ENCODE measurements at regions of chr1 and their contacts with region 1.

Region 1: DNA sequence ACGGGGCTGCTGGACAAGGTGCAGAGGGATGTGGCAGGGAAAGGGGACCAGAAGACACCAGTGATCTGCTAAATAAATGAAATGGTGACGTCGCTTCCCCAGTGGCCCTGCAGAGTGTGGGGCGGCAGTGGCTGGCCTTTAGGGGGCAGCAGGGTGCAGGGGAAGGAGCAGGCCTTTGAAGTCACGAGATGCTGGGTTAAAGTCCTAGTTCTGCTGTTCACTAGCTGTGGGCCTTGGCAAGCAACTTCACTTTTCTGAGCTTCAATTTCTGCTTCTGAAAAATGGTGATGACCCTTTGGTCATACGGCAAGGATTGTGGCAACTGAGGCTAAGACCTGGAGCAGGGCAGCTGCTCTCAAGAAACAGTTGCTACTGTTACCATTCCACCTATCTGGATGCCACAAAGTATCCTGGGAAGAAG is 9.2 kb upstream of the GALE start:
- DNase-seq: peak; percentile 90
- ATAC-seq: peak; percentile 89
- H3K4me3 ChIP-seq: peak overlapping the region in 1 of 5 experiments; percentile 29
- H3K4me3 Mint-ChIP-seq: no peak overlapping the region
- H3K27ac ChIP-seq: peak overlapping the region; percentile 53 to 73
- H3K27ac Mint-ChIP-seq: peak overlapping the region; percentile 84
- H3K4me1 ChIP-seq: peaks cover 18 to 21% of the 10 kb centered on the region in 2 donors
- H3K4me1 Mint-ChIP-seq: peaks cover 26% of the 10 kb centered on the region
- H3K27me3 ChIP-seq: no peaks in the 10 kb centered on the region
- H3K27me3 Mint-ChIP-seq: no peaks in the 10 kb centered on the region
- CTCF ChIP-seq: peak; percentile 78

Region 2: DNA sequence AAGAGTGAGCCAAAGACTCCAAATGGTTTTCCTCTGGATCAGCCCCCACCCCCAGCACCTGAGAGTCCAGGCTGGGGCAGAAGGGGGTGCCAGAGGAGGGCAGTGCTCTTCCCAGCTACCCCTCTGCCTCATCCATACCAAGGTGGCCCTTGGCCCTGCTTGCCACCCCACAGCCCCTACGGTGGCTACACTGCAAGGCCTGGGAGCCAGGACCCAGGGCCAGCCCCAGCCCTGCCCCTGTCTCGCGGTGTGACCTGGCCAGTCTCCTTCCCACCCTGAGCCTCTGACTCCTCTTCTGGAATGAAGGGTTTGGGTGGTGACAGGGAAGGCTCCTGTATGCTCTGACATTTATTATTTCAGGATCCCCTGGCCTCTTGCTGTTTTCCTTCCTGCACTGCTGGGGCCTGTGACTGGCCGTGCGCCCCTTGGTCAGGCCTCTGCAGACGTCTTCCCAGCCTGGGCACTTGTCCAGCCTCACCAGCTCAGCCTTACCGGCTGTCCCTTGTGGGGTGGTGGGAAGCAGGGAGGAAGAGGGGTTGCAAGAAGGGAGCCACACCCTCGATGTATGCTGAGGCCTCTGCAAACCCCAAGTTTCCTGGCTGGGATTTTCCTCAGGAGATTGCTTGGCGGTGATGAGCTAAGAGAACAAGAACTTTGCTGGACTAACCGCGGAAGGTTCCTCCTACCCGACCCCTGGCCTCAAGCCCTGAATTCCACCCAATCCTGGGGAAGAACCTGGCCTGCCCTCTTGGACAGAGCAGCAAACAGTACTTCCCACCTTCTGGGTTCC is 339.3 kb before region 1 on chr1:
- CTCF ChIA-PET with region 1: no interaction called
- POLR2A ChIA-PET with region 1: no interaction called
- intact Hi-C with region 1: no loop called
- DNase-seq: no peak
- ATAC-seq: no peak
- H3K4me3 ChIP-seq: no peak overlapping the region
- H3K4me3 Mint-ChIP-seq: no peak overlapping the region
- H3K27ac ChIP-seq: no peak overlapping the region
- H3K27ac Mint-ChIP-seq: no peak overlapping the region
- H3K4me1 ChIP-seq: no peaks in the 10 kb centered on the region
- H3K4me1 Mint-ChIP-seq: no peaks in the 10 kb centered on the region
- H3K27me3 ChIP-seq: peaks cover 0 to 5% (median 2%) of the 10 kb centered on the region in 4 experiments
- H3K27me3 Mint-ChIP-seq: peaks cover 4% of the 10 kb centered on the region
- CTCF ChIP-seq: no peak

Region 3: GRCh38 chr1:23777979-23778814 is 31.6 kb before region 1 on chr1 and contains the start of gene PITHD1:
- CTCF ChIA-PET with region 1: interaction called, 23 read pairs
- POLR2A ChIA-PET with region 1: interaction called, 6 read pairs
- intact Hi-C with region 1: loop called (anchors 5 kb)
- DNase-seq: peak; percentile 92
- ATAC-seq: peak; percentile 88
- H3K4me3 ChIP-seq: peak within 1 kb of the TSS; percentile 60 to 91 (median 86)
- H3K4me3 Mint-ChIP-seq: peak within 1 kb of the TSS; percentile 91
- H3K27ac ChIP-seq: peak within 1 kb of the TSS; percentile 67 to 86
- H3K27ac Mint-ChIP-seq: peak within 1 kb of the TSS; percentile 90
- H3K4me1 ChIP-seq: peaks cover 15 to 20% of the 10 kb centered on the region in 2 donors
- H3K4me1 Mint-ChIP-seq: peaks cover 30% of the 10 kb centered on the region
- H3K27me3 ChIP-seq: no peaks in the 10 kb centered on the region
- H3K27me3 Mint-ChIP-seq: no peaks in the 10 kb centered on the region
- CTCF ChIP-seq: no peak
- total RNA-seq, gene PITHD1: 56.7 and 62.2 TPM in 2 replicates

Region 4: DNA sequence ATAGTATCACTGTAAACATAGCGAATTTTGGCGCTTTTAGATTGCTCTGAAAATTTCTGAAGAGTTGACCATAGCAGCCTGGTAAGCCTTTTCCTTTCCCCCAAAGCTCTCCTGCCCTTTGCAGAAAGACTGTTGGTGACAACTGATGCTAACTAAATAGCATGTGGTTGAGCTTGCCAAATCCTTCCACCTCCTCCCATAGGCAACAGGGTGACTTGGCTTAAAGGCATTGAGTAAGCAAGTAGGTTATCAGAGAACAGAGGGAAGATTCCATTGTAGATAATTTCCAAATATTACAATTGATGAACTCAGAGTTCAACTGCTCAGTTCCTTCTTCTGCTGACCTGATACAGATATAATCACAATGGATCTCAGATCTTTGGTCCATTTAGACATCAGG is 35.4 kb after region 1 on chr1:
- CTCF ChIA-PET with region 1: interaction called, 15 read pairs
- POLR2A ChIA-PET with region 1: no interaction called
- intact Hi-C with region 1: no loop called
- DNase-seq: no peak
- ATAC-seq: no peak
- H3K4me3 ChIP-seq: no peak overlapping the region
- H3K4me3 Mint-ChIP-seq: no peak overlapping the region
- H3K27ac ChIP-seq: no peak overlapping the region
- H3K27ac Mint-ChIP-seq: no peak overlapping the region
- H3K4me1 ChIP-seq: no peaks in the 10 kb centered on the region
- H3K4me1 Mint-ChIP-seq: no peaks in the 10 kb centered on the region
- H3K27me3 ChIP-seq: no peaks in the 10 kb centered on the region
- H3K27me3 Mint-ChIP-seq: no peaks in the 10 kb centered on the region
- CTCF ChIP-seq: no peak

Region 5: DNA sequence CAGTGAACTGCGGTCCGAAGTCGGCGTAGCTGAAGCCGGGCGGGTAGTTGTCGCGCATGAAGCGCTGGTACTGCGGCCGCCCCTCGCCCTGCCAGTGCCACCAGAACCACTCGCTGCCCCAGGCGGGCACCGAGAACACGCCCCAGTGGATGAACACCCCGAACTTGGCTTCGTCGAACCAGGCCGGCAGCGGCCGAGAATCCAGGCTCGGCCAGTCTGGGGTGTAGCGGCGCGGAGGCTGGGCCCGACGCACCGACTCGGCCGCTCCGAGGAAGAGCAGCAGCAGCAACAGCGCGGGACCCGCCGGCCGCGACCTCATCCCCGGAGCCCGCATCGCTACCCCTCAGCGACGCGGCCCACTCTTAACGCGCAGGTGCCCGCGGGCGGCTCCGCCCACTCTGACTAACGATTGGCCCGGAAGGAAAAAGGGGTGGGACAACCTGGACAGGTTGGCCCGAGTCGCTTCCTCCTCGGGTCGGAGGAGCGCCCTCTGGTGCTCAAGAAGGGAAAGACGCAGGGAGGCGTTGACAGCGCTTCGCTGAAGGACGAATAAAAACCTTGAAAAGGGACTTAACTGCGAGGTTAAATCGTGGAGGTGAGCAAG is 58.3 kb after region 1 on chr1 and contains the start of gene FUCA1:
- CTCF ChIA-PET with region 1: interaction called, 40 read pairs
- POLR2A ChIA-PET with region 1: interaction called, 3 read pairs
- intact Hi-C with region 1: loop called (anchors 1 kb)
- DNase-seq: peak; percentile 97
- ATAC-seq: peak; percentile 98
- H3K4me3 ChIP-seq: peak within 1 kb of the TSS; percentile 42 to 81 (median 61)
- H3K4me3 Mint-ChIP-seq: peak within 1 kb of the TSS; percentile 93
- H3K27ac ChIP-seq: peak within 1 kb of the TSS in 1 of 2 donors; percentile 73
- H3K27ac Mint-ChIP-seq: peak within 1 kb of the TSS; percentile 91
- H3K4me1 ChIP-seq: peaks cover 18% of the 10 kb centered on the region in 2 donors
- H3K4me1 Mint-ChIP-seq: peaks cover 45% of the 10 kb centered on the region
- H3K27me3 ChIP-seq: no peaks in the 10 kb centered on the region
- H3K27me3 Mint-ChIP-seq: no peaks in the 10 kb centered on the region
- CTCF ChIP-seq: peak; percentile 93
- total RNA-seq, gene FUCA1: 17.4 and 19.3 TPM in 2 replicates

Region 6: GRCh38 chr1:23908493-23909341 is 99.0 kb after region 1 on chr1:
- CTCF ChIA-PET with region 1: interaction called, 40 read pairs
- POLR2A ChIA-PET with region 1: interaction called, 8 read pairs
- intact Hi-C with region 1: no loop called
- DNase-seq: peak; percentile 80
- ATAC-seq: peak; percentile 58
- H3K4me3 ChIP-seq: peak overlapping the region; percentile 53 to 94 (median 77)
- H3K4me3 Mint-ChIP-seq: peak overlapping the region; percentile 99
- H3K27ac ChIP-seq: peak overlapping the region; percentile 83 to 93
- H3K27ac Mint-ChIP-seq: peak overlapping the region; percentile 99
- H3K4me1 ChIP-seq: peaks cover 77 to 91% of the 10 kb centered on the region in 2 donors
- H3K4me1 Mint-ChIP-seq: peaks cover 86% of the 10 kb centered on the region
- H3K27me3 ChIP-seq: no peaks in the 10 kb centered on the region
- H3K27me3 Mint-ChIP-seq: no peaks in the 10 kb centered on the region
- CTCF ChIP-seq: no peak

Region 7: DNA sequence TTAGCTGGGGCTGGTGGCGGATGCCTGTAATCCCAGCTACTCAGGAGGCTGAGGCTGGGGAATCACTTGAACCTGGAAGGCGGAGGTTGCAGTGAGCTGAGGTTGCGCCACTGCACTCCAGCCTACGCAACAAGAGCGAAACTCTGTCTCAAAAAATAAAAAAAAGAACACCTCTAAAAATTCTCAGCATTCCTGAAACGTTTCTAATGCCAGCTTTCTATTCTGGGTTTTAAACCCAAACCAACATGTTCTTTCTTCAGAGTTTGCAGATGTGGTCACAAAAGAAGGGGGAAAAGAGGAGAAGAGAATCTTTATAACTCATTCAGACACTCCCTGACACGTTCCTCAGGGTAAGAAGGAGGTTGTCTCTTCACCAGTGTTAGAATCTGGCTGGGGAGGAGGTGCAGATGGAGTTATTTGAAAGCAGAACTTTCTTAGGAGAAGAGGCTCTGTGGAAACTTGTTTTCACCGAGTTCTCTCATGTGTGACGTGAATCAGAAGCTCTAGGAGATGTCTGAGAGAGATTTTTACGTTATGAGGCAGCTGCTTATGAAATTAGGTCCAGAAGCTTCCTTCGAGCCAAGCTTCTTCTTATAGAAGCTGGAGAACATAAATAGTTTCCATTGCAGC is 121.2 kb after region 1 on chr1:
- CTCF ChIA-PET with region 1: interaction called, 15 read pairs
- POLR2A ChIA-PET with region 1: no interaction called
- intact Hi-C with region 1: no loop called
- DNase-seq: peak; percentile 65
- ATAC-seq: peak; percentile 83
- H3K4me3 ChIP-seq: peak overlapping the region in 4 of 5 experiments; percentile 2 to 60 (median 28)
- H3K4me3 Mint-ChIP-seq: peak overlapping the region; percentile 85
- H3K27ac ChIP-seq: peak overlapping the region; percentile 46 to 76
- H3K27ac Mint-ChIP-seq: peak overlapping the region; percentile 98
- H3K4me1 ChIP-seq: peaks cover 22 to 37% of the 10 kb centered on the region in 2 donors
- H3K4me1 Mint-ChIP-seq: peaks cover 38% of the 10 kb centered on the region
- H3K27me3 ChIP-seq: no peaks in the 10 kb centered on the region
- H3K27me3 Mint-ChIP-seq: no peaks in the 10 kb centered on the region
- CTCF ChIP-seq: no peak

Region 8: DNA sequence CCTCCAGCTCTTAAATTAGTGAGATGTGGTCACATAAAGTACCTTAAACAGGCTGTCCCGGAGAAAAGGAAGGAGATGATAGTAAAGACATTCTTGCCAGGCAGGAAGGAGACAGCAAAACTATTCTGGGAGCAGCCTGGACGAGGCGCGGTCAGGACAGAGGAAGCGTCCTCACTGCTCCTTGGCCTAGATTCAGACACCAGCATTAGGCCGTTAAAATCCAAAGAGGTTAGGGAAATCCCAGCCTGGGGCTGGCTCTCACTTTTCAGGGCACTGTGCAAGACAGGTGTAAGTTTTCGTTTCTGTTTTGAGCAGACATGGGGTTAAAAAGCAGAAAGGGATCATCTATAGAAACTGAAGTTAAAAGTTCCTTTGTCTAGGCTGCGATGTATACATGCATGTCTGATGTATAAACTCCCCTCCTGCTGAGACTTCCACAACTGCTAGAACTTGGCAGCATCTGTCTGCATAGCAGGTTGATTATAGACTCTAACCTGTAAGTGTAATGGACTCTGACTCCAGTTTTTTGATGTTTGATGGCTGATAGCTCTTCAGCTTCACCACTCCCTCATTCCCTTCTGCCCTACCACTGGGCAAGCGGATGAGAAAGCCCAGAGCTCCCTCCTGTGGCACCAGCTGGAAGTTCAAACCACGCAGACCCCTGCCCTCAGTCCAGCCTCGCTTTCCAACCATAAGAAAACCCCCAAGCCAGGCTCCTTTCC is 582.3 kb after region 1 on chr1:
- CTCF ChIA-PET with region 1: interaction called, 16 read pairs
- POLR2A ChIA-PET with region 1: no interaction called
- intact Hi-C with region 1: no loop called
- DNase-seq: peak; percentile 80
- ATAC-seq: peak; percentile 75
- H3K4me3 ChIP-seq: peak overlapping the region in 2 of 5 experiments; percentile 5 to 37
- H3K4me3 Mint-ChIP-seq: peak overlapping the region; percentile 81
- H3K27ac ChIP-seq: peak overlapping the region; percentile 81 to 92
- H3K27ac Mint-ChIP-seq: peak overlapping the region; percentile 92
- H3K4me1 ChIP-seq: peaks cover 26 to 33% of the 10 kb centered on the region in 2 donors
- H3K4me1 Mint-ChIP-seq: peaks cover 31% of the 10 kb centered on the region
- H3K27me3 ChIP-seq: no peaks in the 10 kb centered on the region
- H3K27me3 Mint-ChIP-seq: no peaks in the 10 kb centered on the region
- CTCF ChIP-seq: peak; percentile 74